Natural killer cell (primary cell): ENCODE measurements at regions of chr21 and their contacts with region 1.

Region 1: GRCh38 chr21:28832013-28832714 is 160.5 kb downstream of the LTN1 start:
- DNase-seq: peak in 1 of 2 donors; percentile 69
- ATAC-seq: peak; percentile 81 to 92 (median 91)
- H3K4me3 ChIP-seq: no peak overlapping the region
- H3K4me3 Mint-ChIP-seq: peak overlapping the region; percentile 80
- H3K27ac ChIP-seq: peak overlapping the region; percentile 57
- H3K27ac Mint-ChIP-seq: peak overlapping the region; percentile 82 to 86
- H3K4me1 ChIP-seq: peaks cover 34% of the 10 kb centered on the region
- H3K4me1 Mint-ChIP-seq: peaks cover 90 to 93% of the 10 kb centered on the region in 2 donors
- H3K27me3 ChIP-seq: no peaks in the 10 kb centered on the region
- H3K27me3 Mint-ChIP-seq: no peaks in the 10 kb centered on the region
- CTCF ChIP-seq: no peak

Region 2: GRCh38 chr21:27645285-27645684 is 1186.9 kb before region 1 on chr21:
- intact Hi-C with region 1: no loop called
- DNase-seq: no peak
- ATAC-seq: no peak
- H3K4me3 ChIP-seq: no peak overlapping the region
- H3K4me3 Mint-ChIP-seq: no peak overlapping the region
- H3K27ac ChIP-seq: no peak overlapping the region
- H3K27ac Mint-ChIP-seq: no peak overlapping the region
- H3K4me1 ChIP-seq: no peaks in the 10 kb centered on the region
- H3K4me1 Mint-ChIP-seq: no peaks in the 10 kb centered on the region
- H3K27me3 ChIP-seq: no peaks in the 10 kb centered on the region
- H3K27me3 Mint-ChIP-seq: no peaks in the 10 kb centered on the region
- CTCF ChIP-seq: no peak

Region 3: DNA sequence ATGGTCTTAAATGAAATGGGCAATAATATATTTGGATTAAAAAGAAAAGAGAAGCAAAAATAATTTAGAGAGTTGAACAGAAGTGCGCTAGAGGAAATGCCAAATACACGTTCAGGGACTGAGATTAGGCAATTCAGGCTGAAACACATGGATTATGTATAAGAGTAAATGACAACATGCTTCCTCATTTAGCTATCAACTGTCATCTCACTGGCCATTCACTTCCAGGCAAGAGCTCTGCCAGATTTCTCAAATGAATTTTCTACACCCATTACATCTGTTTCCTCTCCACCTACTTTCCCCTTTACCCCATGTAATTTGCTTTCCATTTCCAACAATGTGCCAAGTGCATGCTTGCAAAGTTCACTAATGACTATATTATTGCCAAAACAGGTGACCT is 421.9 kb before region 1 on chr21:
- intact Hi-C with region 1: no loop called
- DNase-seq: no peak
- ATAC-seq: no peak
- H3K4me3 ChIP-seq: no peak overlapping the region
- H3K4me3 Mint-ChIP-seq: no peak overlapping the region
- H3K27ac ChIP-seq: no peak overlapping the region
- H3K27ac Mint-ChIP-seq: no peak overlapping the region
- H3K4me1 ChIP-seq: no peaks in the 10 kb centered on the region
- H3K4me1 Mint-ChIP-seq: no peaks in the 10 kb centered on the region
- H3K27me3 ChIP-seq: no peaks in the 10 kb centered on the region
- H3K27me3 Mint-ChIP-seq: no peaks in the 10 kb centered on the region
- CTCF ChIP-seq: no peak

Region 4: DNA sequence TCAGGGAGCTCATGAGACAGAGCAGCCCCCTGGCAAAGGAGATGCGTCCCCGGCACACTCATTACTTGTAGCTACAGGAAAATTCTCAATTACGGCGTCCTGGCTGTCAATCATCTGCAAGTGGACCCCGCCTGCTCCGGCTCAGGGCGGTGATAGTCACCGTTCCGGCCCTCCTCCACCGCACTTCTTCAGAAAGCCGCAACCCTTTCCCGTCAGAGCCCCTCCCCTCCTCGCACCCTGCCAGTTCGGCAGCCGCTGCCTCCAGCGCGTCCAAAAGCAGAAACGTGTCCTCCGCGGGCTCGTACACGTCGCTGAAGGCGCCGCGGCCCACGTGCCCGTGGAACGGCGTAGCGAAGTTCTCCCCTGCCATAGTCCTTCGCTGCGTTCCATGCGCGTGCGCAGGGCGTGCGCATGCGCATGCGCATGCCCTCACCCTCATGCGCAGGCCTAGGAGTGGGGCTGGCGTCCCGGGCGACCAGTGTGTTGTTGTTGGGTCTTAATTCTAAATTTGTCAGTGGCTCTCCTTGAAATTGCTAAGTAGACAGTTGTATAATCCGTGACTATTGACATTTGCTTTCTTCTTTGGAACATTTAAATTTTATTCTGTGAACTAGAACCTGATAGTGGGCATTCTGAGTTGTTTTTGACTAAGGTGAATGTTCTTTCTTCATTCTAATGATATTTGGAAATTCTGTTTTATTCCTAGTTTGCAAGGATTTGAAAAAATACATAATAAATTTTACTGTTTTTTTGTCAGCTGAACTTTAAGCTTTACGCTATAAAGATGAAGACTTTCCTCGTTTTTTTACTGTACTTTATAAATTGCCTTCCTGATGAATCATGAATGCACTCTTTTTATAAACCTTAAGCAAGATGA is 53.0 kb after region 1 on chr21:
- intact Hi-C with region 1: loop called (anchors 1 kb)
- DNase-seq: peak; percentile 86 to 98
- ATAC-seq: peak; percentile 89 to 98 (median 93)
- H3K4me3 ChIP-seq: peak overlapping the region; percentile 66
- H3K4me3 Mint-ChIP-seq: peak overlapping the region; percentile 95
- H3K27ac ChIP-seq: peak overlapping the region; percentile 86
- H3K27ac Mint-ChIP-seq: peak overlapping the region; percentile 98 to 100
- H3K4me1 ChIP-seq: peaks cover 3% of the 10 kb centered on the region
- H3K4me1 Mint-ChIP-seq: peaks cover 23 to 25% of the 10 kb centered on the region in 2 donors
- H3K27me3 ChIP-seq: no peaks in the 10 kb centered on the region
- H3K27me3 Mint-ChIP-seq: peaks cover 12 to 31% of the 10 kb centered on the region in 2 donors
- CTCF ChIP-seq: no peak